Caco-2 (cell line): ENCODE measurements at regions of chrX and their contacts with region 1.

Region 1: DNA sequence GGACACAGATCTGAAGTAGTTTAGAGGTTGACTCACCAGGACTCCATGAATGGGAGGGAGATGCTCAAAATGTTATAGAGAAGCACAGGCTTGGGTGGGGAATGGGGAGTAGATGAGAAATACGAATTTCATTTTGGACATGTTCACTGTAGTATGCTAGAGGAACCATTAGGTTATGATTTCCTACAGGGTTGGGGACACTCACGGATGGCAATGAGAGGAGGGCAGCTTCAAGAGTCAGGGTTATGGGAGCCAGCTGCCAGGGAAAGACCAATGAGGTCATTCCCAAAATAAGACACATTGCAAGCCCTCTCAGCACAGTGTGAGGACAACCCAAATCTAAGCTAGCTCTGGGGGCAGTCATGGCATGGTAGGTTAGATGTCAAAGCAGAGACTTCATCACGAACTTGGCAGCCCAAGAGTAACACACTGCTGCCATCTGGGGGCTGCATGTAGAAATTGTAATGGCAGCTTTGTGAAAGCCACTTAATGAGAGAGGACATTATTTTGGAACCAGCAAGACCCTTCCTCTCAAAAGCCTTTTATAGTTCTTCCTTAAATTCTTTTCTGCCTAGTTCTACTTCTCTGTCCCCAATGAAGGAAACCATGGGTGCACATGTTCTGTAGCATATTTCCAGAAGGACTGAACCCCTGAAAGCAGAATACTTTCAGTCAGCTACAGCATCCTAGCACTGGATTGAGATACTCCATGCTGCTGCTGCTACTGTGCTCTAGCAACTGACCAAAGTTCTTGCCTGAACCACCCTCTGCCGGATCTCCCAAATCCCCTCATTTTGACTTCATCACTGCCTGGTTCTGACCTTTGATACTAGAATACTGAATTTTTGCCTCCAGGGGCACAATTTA is 16.2 kb upstream of the ZCCHC12 start:
- DNase-seq: peak; percentile 36 to 49
- H3K4me3 ChIP-seq: no peak overlapping the region
- H3K4me3 Mint-ChIP-seq: no peak overlapping the region
- H3K27ac Mint-ChIP-seq: no peak overlapping the region
- H3K4me1 ChIP-seq: no peaks in the 10 kb centered on the region
- H3K4me1 Mint-ChIP-seq: no peaks in the 10 kb centered on the region
- H3K27me3 ChIP-seq: no peaks in the 10 kb centered on the region
- H3K27me3 Mint-ChIP-seq: no peaks in the 10 kb centered on the region
- CTCF ChIP-seq: peak; percentile 55 to 70

Region 2: GRCh38 chrX:118164138-118164537 is 643.2 kb before region 1 on chrX:
- CTCF ChIA-PET with region 1: no interaction called
- POLR2A ChIA-PET with region 1: no interaction called
- intact Hi-C with region 1: no loop called
- DNase-seq: no peak
- H3K4me3 ChIP-seq: no peak overlapping the region
- H3K4me3 Mint-ChIP-seq: no peak overlapping the region
- H3K27ac Mint-ChIP-seq: no peak overlapping the region
- H3K4me1 ChIP-seq: no peaks in the 10 kb centered on the region
- H3K4me1 Mint-ChIP-seq: no peaks in the 10 kb centered on the region
- H3K27me3 ChIP-seq: no peaks in the 10 kb centered on the region
- H3K27me3 Mint-ChIP-seq: no peaks in the 10 kb centered on the region
- CTCF ChIP-seq: no peak

Region 3: DNA sequence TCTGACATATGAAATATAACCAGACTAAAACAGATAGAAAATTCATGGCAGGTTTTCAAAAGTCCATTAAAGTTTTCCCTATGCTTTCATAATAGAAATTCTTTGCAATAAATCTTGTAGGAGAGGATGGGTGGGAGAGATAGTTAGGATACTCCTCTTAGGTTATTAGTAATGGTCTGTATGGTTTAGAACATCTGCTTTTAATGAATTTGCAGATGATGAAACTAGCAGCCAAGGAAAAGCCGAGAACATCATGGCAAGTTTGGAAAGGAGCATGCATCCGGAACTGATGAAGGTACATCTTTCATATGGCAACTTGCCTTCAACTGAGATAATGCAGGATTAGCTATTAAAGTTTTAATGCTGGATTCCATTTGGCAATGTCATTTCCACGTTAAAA is 241.0 kb before region 1 on chrX:
- CTCF ChIA-PET with region 1: no interaction called
- POLR2A ChIA-PET with region 1: no interaction called
- intact Hi-C with region 1: no loop called
- DNase-seq: no peak
- H3K4me3 ChIP-seq: no peak overlapping the region
- H3K4me3 Mint-ChIP-seq: no peak overlapping the region
- H3K27ac Mint-ChIP-seq: no peak overlapping the region
- H3K4me1 ChIP-seq: no peaks in the 10 kb centered on the region
- H3K4me1 Mint-ChIP-seq: peaks cover 12% of the 10 kb centered on the region
- H3K27me3 ChIP-seq: no peaks in the 10 kb centered on the region
- H3K27me3 Mint-ChIP-seq: no peaks in the 10 kb centered on the region
- CTCF ChIP-seq: no peak

Region 4: GRCh38 chrX:118603981-118604380 is 203.4 kb before region 1 on chrX:
- CTCF ChIA-PET with region 1: no interaction called
- POLR2A ChIA-PET with region 1: no interaction called
- intact Hi-C with region 1: loop called (anchors 1 kb)
- DNase-seq: peak; percentile 56
- H3K4me3 ChIP-seq: no peak overlapping the region
- H3K4me3 Mint-ChIP-seq: peak overlapping the region; percentile 63
- H3K27ac Mint-ChIP-seq: peak overlapping the region; percentile 25
- H3K4me1 ChIP-seq: no peaks in the 10 kb centered on the region
- H3K4me1 Mint-ChIP-seq: peaks cover 7% of the 10 kb centered on the region
- H3K27me3 ChIP-seq: no peaks in the 10 kb centered on the region
- H3K27me3 Mint-ChIP-seq: no peaks in the 10 kb centered on the region
- CTCF ChIP-seq: peak; percentile 39 to 64

Region 5: DNA sequence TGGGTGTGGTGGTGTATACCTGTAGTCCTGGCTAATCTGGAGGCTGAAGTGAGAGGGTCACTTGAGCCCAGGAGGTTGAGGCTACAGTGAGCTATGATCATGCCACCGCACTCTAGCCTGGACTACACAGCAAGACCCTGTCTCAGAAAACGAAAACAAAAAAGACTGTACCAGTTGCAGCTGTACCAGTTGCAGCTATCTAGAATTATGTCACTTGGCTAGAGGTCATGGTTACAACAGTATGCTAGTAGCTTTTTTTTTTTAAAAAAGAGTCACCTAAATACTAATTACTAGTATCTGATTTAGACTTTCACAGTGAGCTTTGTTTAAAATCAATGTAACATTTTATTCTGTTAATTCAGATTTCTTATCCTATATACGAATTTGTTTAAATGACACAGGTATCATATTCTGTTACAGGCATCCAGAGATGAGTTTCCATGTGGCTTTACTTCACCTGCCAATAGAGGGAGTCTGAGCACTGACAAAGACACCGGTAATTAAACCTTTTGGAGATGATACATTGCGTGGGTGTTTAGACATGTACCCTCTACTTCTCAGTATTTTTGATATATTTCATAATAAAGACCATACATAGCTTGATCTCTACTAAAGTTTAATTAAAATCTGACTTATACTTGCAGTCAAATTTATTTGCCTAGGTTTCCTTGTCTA is 180.2 kb before region 1 on chrX:
- CTCF ChIA-PET with region 1: no interaction called
- POLR2A ChIA-PET with region 1: no interaction called
- intact Hi-C with region 1: loop called (anchors 1 kb)
- DNase-seq: peak in 1 of 2 experiments; percentile 5
- H3K4me3 ChIP-seq: no peak overlapping the region
- H3K4me3 Mint-ChIP-seq: no peak overlapping the region
- H3K27ac Mint-ChIP-seq: no peak overlapping the region
- H3K4me1 ChIP-seq: no peaks in the 10 kb centered on the region
- H3K4me1 Mint-ChIP-seq: no peaks in the 10 kb centered on the region
- H3K27me3 ChIP-seq: no peaks in the 10 kb centered on the region
- H3K27me3 Mint-ChIP-seq: no peaks in the 10 kb centered on the region
- CTCF ChIP-seq: peak; percentile 32 to 42

Region 6: GRCh38 chrX:118644378-118644777 is 163.0 kb before region 1 on chrX:
- CTCF ChIA-PET with region 1: interaction called, 5 read pairs
- POLR2A ChIA-PET with region 1: no interaction called
- intact Hi-C with region 1: loop called (anchors 1 kb)
- DNase-seq: peak in 1 of 2 experiments; percentile 23
- H3K4me3 ChIP-seq: no peak overlapping the region
- H3K4me3 Mint-ChIP-seq: no peak overlapping the region
- H3K27ac Mint-ChIP-seq: no peak overlapping the region
- H3K4me1 ChIP-seq: no peaks in the 10 kb centered on the region
- H3K4me1 Mint-ChIP-seq: peaks cover 9% of the 10 kb centered on the region
- H3K27me3 ChIP-seq: no peaks in the 10 kb centered on the region
- H3K27me3 Mint-ChIP-seq: no peaks in the 10 kb centered on the region
- CTCF ChIP-seq: peak in 1 of 2 experiments; percentile 41

Region 7: DNA sequence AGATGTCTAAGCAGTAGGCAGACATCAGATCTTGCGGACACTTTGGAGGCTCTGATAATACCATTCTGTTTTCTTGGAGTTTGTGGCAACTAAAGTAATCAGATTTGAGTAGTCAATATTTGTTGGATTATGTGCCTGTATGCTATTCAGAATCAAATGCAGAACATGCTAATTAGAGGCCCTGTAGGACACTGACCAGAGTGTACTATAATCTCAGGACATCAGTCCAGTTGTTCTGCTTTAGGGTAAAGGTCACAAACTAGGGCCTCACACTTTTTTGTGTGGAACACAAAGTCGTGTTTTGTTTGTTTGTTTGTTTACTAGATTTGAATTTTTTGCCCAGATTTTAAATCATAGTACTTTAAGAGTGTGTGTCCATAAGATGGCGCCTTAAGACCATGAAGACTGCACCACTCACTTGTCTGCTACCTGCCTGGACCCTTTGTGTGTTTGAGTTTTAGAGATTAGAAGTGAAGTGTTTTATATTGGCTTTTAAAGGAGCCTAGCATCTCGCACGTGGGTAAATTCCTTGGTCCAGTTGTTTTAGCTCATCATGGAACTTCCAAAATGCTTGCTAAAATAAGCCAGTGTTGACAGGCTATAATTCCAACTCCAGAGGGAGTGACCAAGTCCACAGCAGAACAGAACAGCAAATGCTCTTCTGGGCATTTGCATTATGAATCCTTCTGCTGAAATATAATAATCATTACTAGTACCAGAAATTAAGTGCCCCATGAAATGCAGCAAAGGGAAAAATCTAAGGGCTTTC is 45.3 kb before region 1 on chrX:
- CTCF ChIA-PET with region 1: no interaction called
- POLR2A ChIA-PET with region 1: no interaction called
- intact Hi-C with region 1: loop called (anchors 1 kb)
- DNase-seq: no peak
- H3K4me3 ChIP-seq: no peak overlapping the region
- H3K4me3 Mint-ChIP-seq: no peak overlapping the region
- H3K27ac Mint-ChIP-seq: no peak overlapping the region
- H3K4me1 ChIP-seq: no peaks in the 10 kb centered on the region
- H3K4me1 Mint-ChIP-seq: no peaks in the 10 kb centered on the region
- H3K27me3 ChIP-seq: no peaks in the 10 kb centered on the region
- H3K27me3 Mint-ChIP-seq: no peaks in the 10 kb centered on the region
- CTCF ChIP-seq: no peak